Mucosa of descending colon (tissue), 3 donors: ENCODE measurements at regions of chr6 and their contacts with region 1.

Region 1: DNA sequence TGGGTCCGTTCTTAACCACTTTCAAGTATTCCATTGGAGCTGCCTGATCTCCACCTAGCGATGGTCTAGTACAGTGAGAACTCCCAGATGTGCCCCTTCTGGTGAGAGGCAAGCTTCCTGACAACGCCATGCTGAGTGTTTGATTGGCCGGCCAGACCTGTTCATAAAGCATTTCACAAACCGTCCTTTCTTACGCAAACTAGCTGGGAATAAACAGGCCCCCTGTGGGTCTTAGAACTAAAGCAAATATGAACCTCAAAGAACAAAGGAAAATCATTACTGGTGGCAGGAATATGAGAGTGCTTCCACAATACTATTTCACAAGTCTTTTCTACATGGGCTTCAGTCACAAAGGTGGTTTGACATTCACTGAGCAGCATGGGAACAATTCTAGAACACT is 15.6 kb upstream of the GCNT2 start:
- DNase-seq: no peak
- ATAC-seq: no peak
- H3K4me3 ChIP-seq: no peak overlapping the region
- H3K4me1 ChIP-seq: no peaks in the 10 kb centered on the region
- CTCF ChIP-seq: no peak

Region 2: DNA sequence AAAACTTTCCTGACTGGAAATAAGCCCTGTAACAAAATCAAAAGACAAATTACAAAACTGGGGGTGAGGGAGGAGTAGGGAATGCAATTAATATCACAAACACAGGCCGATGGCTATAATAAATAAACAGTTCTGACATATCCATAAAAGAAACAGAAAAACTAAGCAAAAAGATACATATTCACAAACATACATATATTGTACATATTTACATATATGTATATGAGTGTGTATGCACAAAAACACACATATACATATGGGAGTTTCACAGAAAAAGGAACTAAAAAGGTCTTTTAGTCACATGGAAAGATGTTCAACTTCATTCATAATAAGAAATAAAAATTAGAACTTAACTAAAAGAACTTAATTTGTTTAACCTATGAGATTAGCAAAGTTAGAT is 383.4 kb before region 1 on chr6:
- intact Hi-C with region 1: no loop called
- DNase-seq: no peak
- ATAC-seq: no peak
- H3K4me3 ChIP-seq: no peak overlapping the region
- H3K4me1 ChIP-seq: no peaks in the 10 kb centered on the region
- CTCF ChIP-seq: no peak

Region 3: GRCh38 chr6:10465629-10466504 is 39.7 kb before region 1 on chr6:
- intact Hi-C with region 1: no loop called
- DNase-seq: peak in 1 of 3 donors; percentile 40
- ATAC-seq: no peak
- H3K4me3 ChIP-seq: no peak overlapping the region
- H3K4me1 ChIP-seq: no peaks in the 10 kb centered on the region
- CTCF ChIP-seq: no peak

Region 4: GRCh38 chr6:10694302-10695085 is 189.0 kb after region 1 on chr6 and contains the starts of genes C6orf52 and PAK1IP1:
- intact Hi-C with region 1: loop called (anchors 5 to 10 kb)
- DNase-seq: peak; percentile 92 to 96 (median 95)
- ATAC-seq: peak; percentile 99
- H3K4me3 ChIP-seq: peak within 1 kb of the TSS; percentile 73
- H3K4me1 ChIP-seq: peaks cover 16% of the 10 kb centered on the region
- CTCF ChIP-seq: no peak
- total RNA-seq, gene C6orf52: 1.2 to 1.7 TPM in 2 of 3 donors, not detected in the other
- total RNA-seq, gene PAK1IP1: 5.8 to 12.5 (median 9.8) TPM

Region 5: DNA sequence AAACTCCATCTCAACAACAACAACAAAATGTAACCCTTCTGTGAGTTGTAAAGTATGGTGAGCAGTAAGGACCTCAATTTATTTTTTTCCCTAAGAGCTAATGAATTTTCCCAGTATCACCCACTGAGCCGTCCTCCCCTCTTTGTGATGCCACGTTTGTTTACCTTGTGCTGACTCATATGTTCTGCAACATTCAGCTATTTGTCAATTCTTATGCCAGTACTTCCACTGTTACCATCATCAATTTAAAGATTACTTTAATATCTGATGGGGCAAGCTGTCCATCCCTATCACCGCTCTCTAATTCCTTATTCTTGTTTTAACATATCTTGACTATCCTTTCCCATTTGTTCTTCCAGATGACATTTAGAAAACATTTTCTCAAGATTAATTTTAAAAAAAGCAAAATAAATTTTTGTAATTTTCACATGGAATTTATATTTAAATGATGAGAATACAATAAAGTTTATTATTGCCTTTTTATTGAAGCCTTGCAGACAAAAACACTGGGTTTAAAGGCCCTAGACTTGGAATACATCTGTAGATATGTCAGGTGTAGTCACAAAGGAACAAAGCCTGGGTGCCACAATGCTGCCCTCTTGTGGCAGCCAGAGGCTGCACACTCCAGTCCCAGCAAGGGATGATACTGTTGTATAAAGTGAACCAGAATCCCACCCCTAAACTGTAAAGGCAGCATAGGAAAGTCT is 295.5 kb after region 1 on chr6:
- intact Hi-C with region 1: loop called in 1 of 2 experiments (anchors 10 kb)
- DNase-seq: peak in 2 of 3 donors; percentile 67 to 69
- ATAC-seq: peak; percentile 95
- H3K4me3 ChIP-seq: no peak overlapping the region
- H3K4me1 ChIP-seq: no peaks in the 10 kb centered on the region
- CTCF ChIP-seq: peak; percentile 95